ENCODE measurements at regions of chr12 and their contacts with region 1.

Region 1: GRCh38 chr12:111942557-111942956 is 70.4 kb downstream of the TMEM116 start:
- DNase-seq: peak; percentile 79
- H3K4me3 ChIP-seq: no peak overlapping the region
- H3K27ac ChIP-seq: peak overlapping the region; percentile 2
- H3K27me3 ChIP-seq: no peaks in the 10 kb centered on the region
- CTCF ChIP-seq: no peak

Region 2: DNA sequence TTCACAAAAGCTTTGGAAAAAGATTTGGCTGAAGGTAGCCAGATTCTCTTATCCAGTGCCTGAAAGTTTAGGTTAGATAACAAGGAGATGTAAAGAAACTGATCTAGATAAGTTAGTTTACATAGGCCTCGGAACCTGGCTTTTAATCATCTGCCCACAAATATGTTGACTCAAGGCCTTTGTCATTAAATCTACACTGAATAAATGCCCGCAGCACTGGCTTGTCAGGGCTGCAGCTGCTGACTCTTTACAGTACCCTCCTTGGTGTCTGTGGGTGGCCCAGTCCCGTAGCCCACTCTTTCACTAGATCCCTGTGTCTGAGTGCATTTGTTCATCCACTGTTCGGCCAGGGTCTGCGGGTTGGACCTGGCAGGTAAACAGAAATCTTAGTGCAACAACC is 12.4 kb after region 1 on chr12:
- CTCF ChIA-PET with region 1: interaction called, 13 read pairs
- POLR2A ChIA-PET with region 1: no interaction called
- DNase-seq: no peak
- H3K4me3 ChIP-seq: no peak overlapping the region
- H3K27ac ChIP-seq: no peak overlapping the region
- H3K27me3 ChIP-seq: no peaks in the 10 kb centered on the region
- CTCF ChIP-seq: no peak

Region 3: GRCh38 chr12:112012775-112013600 is 70.4 kb after region 1 on chr12 and contains the starts of genes ERP29 and TMEM116:
- CTCF ChIA-PET with region 1: interaction called, 20 read pairs
- POLR2A ChIA-PET with region 1: no interaction called
- DNase-seq: peak; percentile 98
- H3K4me3 ChIP-seq: peak within 1 kb of the TSS; percentile 96
- H3K27ac ChIP-seq: peak within 1 kb of the TSS; percentile 91
- H3K27me3 ChIP-seq: no peaks in the 10 kb centered on the region
- CTCF ChIP-seq: peak; percentile 60
- polyA plus RNA-seq, gene ERP29: 112 and 125 TPM in 2 replicates
- polyA plus RNA-seq, gene TMEM116: 9.4 and 11.1 TPM in 2 replicates

Region 4: GRCh38 chr12:112023759-112024396 is 81.3 kb after region 1 on chr12:
- CTCF ChIA-PET with region 1: interaction called, 11 read pairs
- POLR2A ChIA-PET with region 1: no interaction called
- DNase-seq: no peak
- H3K4me3 ChIP-seq: no peak overlapping the region
- H3K27ac ChIP-seq: no peak overlapping the region
- H3K27me3 ChIP-seq: no peaks in the 10 kb centered on the region
- CTCF ChIP-seq: no peak

Measured in AG04450 (cell line).